ENCODE measurements at regions of chr19 and their contacts with region 1.

Region 1: DNA sequence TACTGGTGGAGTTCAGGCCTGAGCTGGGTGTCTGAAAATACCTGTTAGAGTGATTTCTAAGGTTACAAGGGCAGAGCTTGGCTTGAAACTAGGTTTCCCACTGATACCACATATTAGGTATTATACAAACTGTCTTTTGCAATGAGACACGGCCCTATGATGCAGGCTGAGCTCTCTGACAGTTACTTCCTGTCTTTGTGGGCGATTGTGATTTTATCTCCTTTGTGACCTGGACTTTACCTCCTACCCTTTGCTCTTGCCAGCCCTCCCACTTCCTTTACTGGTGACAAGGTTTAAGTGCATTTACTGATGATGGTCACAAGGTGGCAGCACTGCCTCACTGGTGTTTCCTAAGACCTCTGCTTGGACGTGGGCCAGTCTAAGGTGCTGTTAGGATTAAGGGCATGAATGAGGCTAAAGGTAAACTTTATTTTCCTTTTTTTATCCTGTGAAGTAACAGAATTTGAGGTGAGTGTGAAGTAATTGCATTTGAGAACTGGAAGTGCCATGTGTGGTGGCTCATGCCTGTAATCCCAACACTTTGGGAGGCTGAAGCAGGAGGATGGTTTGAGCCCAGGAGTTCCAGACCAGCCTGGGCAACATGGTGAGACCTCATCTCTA is 7.7 kb upstream of the CXCL17 start:
- DNase-seq: peak; percentile 91
- ATAC-seq: peak; percentile 97
- H3K4me3 Mint-ChIP-seq: no peak overlapping the region
- H3K27ac Mint-ChIP-seq: no peak overlapping the region
- H3K4me1 Mint-ChIP-seq: peaks cover 9% of the 10 kb centered on the region
- H3K27me3 Mint-ChIP-seq: no peaks in the 10 kb centered on the region
- CTCF ChIP-seq: peak; percentile 82

Region 2: DNA sequence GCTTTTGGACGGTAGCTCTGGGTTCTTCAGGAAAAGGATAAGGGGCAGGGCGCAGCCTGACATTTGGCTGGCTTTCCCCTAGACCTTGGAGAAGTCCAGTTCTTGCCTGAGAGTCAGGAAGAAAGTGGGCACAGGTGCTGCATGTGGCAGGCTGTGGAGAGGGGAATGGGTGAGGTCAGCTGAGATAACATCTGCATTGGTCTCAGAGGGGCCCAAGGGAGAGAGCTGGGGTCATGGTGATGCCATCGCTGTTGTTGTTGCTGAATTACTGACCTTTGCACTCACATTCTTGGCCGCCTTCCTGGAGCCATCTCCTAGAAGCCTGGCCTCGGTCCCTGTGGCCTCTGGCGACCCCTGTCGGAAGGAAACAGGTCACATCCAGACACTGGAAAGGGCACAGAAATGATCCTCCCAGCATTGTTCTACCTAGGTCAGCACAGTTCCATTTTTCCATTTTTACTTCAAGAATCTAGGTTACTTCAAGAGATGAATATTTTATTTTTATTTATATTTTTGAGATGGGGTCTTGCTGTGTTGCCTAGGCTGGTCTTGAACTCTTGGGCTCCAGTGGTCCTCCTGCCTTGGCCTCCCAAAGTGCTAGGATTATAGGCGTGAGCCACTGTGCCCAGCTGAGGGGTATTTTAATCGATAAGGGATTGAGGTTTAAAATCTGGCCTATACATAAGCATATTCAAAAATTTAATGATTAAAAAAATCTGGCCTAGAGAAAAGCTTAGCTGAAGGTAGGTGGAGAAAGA is 16.7 kb before region 1 on chr19:
- CTCF ChIA-PET with region 1: interaction called, 42 read pairs
- POLR2A ChIA-PET with region 1: no interaction called
- intact Hi-C with region 1: no loop called
- DNase-seq: peak; percentile 82
- ATAC-seq: peak; percentile 76
- H3K4me3 Mint-ChIP-seq: no peak overlapping the region
- H3K27ac Mint-ChIP-seq: no peak overlapping the region
- H3K4me1 Mint-ChIP-seq: peaks cover 8% of the 10 kb centered on the region
- H3K27me3 Mint-ChIP-seq: no peaks in the 10 kb centered on the region
- CTCF ChIP-seq: peak; percentile 77

Region 3: GRCh38 chr19:42468273-42468796 is 17.9 kb after region 1 on chr19:
- CTCF ChIA-PET with region 1: interaction called, 19 read pairs
- POLR2A ChIA-PET with region 1: no interaction called
- intact Hi-C with region 1: no loop called
- DNase-seq: no peak
- ATAC-seq: no peak
- H3K4me3 Mint-ChIP-seq: no peak overlapping the region
- H3K27ac Mint-ChIP-seq: no peak overlapping the region
- H3K4me1 Mint-ChIP-seq: peaks cover 28% of the 10 kb centered on the region
- H3K27me3 Mint-ChIP-seq: peaks cover 2% of the 10 kb centered on the region
- CTCF ChIP-seq: no peak

Region 4: DNA sequence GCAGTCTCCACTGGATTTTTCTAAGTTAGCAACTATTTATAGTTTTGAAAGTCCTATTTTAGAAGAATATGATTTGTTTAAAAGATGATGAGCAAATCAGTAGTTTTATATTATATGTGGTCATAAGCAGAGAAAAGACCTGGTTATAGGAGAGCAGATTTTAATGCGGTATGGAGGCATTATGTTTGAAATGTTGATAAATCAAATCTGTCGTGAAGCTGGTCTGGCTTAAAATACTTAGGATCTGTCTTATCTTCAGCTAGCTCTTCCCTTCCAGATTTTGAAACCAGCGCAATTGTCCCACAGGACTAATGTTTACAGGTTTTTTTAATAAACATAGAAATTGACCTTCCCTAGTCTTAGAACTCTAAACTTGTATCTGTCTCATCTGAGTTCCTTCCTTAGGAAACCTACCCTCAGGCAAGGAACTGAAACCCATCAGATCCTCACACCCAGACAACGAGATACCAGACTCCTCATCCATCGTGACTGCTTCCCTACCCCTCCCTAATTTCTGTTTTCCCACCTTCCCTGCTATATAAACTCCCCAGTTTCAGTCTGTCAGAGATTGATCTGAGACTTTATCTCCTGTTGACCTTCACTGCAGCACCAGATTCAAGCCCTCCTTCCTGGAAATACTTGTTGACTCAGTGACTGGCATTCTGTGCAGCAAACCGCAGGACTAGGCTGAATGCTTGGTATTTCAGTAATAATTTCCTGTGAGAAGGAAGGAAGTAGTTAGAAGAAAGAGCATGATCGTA is 30.1 kb after region 1 on chr19:
- CTCF ChIA-PET with region 1: interaction called, 11 read pairs
- POLR2A ChIA-PET with region 1: no interaction called
- intact Hi-C with region 1: no loop called
- DNase-seq: peak; percentile 65
- ATAC-seq: peak; percentile 82
- H3K4me3 Mint-ChIP-seq: peak overlapping the region; percentile 22
- H3K27ac Mint-ChIP-seq: peak overlapping the region; percentile 84
- H3K4me1 Mint-ChIP-seq: peaks cover 16% of the 10 kb centered on the region
- H3K27me3 Mint-ChIP-seq: peaks cover 2% of the 10 kb centered on the region
- CTCF ChIP-seq: no peak

Region 5: DNA sequence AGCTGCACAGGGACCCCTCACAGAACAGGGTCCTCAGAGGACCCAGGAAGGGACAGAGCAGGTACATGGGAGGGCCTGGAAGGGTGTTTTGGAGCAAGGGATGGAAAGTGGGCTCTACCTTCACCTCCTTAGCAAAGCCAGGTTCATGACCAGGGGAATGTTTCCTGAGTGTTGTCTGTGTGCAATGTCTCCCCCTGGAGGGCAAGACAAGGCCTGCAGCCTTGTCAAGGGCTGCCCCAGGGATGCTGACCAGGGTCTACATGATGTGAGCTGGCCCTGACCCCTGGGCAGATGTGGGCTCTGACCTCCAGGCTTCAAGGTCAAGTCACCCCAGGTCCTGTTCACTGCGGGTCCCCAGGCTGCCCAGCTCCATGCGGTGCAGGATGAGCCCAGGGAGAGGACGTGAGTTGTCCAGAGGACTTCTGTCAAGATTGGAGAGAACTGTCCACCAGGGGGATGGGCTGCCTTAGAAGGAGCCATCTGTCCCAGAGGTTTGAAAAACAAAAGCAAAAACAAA is 78.9 kb after region 1 on chr19:
- CTCF ChIA-PET with region 1: interaction called, 138 read pairs
- POLR2A ChIA-PET with region 1: interaction called, 3 read pairs
- intact Hi-C with region 1: loop called (anchors 1 kb)
- DNase-seq: peak; percentile 83
- ATAC-seq: peak; percentile 87
- H3K4me3 Mint-ChIP-seq: peak overlapping the region; percentile 72
- H3K27ac Mint-ChIP-seq: peak overlapping the region; percentile 94
- H3K4me1 Mint-ChIP-seq: peaks cover 27% of the 10 kb centered on the region
- H3K27me3 Mint-ChIP-seq: no peaks in the 10 kb centered on the region
- CTCF ChIP-seq: peak; percentile 88

Region 6: DNA sequence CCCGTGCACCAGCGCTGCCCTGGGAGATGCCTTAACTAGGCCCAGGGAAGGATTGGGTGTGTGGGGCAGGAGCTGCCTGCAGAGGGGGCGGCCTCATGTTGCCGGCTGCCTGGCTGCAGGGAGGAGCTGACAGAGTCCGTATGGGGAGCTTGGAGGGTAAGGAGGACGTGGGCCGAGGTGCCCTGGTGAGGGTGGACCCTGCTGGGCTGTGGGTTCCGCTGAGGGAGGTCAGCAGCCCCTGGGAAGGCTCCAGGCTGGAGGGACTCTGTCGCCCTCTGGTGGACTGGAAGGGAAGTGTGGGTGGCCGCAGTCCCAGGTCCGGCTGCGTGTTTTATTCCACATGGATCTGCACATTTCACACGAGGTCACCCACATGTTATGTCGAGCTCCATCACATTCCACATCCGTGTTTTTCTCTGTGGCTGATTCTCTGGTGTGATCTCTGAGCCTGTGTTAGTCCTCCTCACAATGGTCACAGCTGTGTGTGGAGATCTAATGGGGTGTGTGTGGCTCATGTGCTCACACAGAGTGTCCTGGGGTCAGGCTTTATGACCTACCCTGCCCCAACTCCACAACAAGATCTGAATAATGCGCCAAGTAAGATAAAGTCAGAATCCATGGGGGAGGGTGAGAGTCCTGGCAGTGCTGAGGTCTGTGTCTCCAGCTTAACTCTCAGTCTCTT is 146.1 kb after region 1 on chr19:
- CTCF ChIA-PET with region 1: interaction called, 12 read pairs
- POLR2A ChIA-PET with region 1: no interaction called
- intact Hi-C with region 1: no loop called
- DNase-seq: peak; percentile 43
- ATAC-seq: peak; percentile 65
- H3K4me3 Mint-ChIP-seq: no peak overlapping the region
- H3K27ac Mint-ChIP-seq: no peak overlapping the region
- H3K4me1 Mint-ChIP-seq: no peaks in the 10 kb centered on the region
- H3K27me3 Mint-ChIP-seq: peaks cover 11% of the 10 kb centered on the region
- CTCF ChIP-seq: peak; percentile 98

Region 7: DNA sequence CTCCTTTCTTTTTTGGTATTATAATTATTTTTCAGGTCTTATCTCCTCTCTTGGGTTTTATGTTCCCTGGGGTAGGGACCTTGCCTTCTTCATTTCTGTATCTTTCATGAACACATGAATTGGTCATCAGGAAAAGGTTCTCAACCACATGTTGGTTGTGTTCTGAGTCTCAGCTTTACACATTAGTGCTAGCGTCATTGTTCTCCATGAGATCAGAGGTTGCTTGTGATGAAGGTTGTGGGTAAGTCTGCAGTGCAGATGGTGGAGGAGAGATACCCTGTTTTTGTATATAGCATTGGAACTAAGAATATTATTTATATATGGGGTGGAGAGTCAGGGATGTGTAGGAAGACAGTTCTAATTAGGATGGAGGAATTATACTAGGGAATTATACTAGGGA is 168.8 kb after region 1 on chr19:
- CTCF ChIA-PET with region 1: no interaction called
- POLR2A ChIA-PET with region 1: no interaction called
- intact Hi-C with region 1: no loop called
- DNase-seq: no peak
- ATAC-seq: no peak
- H3K4me3 Mint-ChIP-seq: no peak overlapping the region
- H3K27ac Mint-ChIP-seq: no peak overlapping the region
- H3K4me1 Mint-ChIP-seq: no peaks in the 10 kb centered on the region
- H3K27me3 Mint-ChIP-seq: peaks cover 23% of the 10 kb centered on the region
- CTCF ChIP-seq: no peak

Measured in activated CD8-positive, alpha-beta T cell treated with anti-CD3 and anti-CD28 coated beads for 36 hours (primary cell).